Activated CD8-positive, alpha-beta T cell treated with anti-CD3 and anti-CD28 coated beads for 36 hours (primary cell): ENCODE measurements at regions of chr7 and their contacts with region 1.

Region 1: DNA sequence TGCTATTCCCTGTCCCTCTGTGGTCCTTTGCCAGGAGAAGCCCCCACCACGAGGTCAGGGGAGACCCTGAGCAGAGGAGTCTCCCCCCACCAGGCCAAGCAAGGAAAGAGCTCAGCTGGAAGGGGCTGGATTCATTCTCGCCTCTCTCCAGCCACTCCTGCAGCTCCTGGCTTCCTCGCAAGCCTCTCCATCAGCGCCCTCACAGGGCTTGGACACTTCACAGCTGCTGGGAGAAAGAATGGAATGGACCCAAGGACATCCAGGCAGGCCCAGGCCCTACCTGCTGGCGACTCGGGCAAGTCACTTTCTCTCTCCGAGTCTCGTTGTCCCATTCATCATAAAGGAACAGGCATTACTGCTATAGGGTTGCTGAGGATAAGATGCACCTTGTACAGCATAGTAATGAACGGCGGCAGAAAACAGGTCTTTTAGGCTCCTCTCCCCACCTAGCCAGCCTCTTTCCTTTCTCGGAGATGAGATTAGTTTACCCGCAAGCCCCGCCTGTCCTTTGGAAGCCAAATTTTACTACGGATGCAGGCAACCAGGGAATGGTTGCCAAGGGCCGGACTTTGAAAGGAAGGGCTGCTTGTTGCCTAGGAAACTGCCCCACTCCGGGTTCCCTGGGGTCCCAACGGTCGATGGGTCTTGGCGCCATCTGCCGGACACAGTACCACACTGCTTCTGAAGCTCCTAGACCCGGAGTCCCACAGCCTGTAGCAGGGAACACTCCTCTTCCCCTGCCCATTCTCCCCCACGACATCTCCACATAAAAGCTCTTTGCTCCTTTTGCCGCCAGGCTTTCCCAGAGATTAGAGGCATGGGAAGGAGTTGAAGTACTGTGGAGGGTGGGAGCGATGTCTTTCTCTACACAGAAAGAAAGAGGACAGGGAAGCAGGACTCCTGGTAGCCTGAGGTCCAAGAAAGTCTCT is 22.3 kb downstream of the IMPDH1 start:
- DNase-seq: peak; percentile 85
- ATAC-seq: peak; percentile 95
- H3K4me3 Mint-ChIP-seq: no peak overlapping the region
- H3K27ac Mint-ChIP-seq: no peak overlapping the region
- H3K4me1 Mint-ChIP-seq: no peaks in the 10 kb centered on the region
- H3K27me3 Mint-ChIP-seq: no peaks in the 10 kb centered on the region
- CTCF ChIP-seq: peak; percentile 88

Region 2: GRCh38 chr7:128201051-128201689 is 186.3 kb before region 1 on chr7:
- CTCF ChIA-PET with region 1: no interaction called
- POLR2A ChIA-PET with region 1: no interaction called
- intact Hi-C with region 1: no loop called
- DNase-seq: no peak
- ATAC-seq: peak; percentile 30
- H3K4me3 Mint-ChIP-seq: peak overlapping the region; percentile 41
- H3K27ac Mint-ChIP-seq: no peak overlapping the region
- H3K4me1 Mint-ChIP-seq: peaks cover 9% of the 10 kb centered on the region
- H3K27me3 Mint-ChIP-seq: peaks cover 42% of the 10 kb centered on the region
- CTCF ChIP-seq: no peak

Region 3: DNA sequence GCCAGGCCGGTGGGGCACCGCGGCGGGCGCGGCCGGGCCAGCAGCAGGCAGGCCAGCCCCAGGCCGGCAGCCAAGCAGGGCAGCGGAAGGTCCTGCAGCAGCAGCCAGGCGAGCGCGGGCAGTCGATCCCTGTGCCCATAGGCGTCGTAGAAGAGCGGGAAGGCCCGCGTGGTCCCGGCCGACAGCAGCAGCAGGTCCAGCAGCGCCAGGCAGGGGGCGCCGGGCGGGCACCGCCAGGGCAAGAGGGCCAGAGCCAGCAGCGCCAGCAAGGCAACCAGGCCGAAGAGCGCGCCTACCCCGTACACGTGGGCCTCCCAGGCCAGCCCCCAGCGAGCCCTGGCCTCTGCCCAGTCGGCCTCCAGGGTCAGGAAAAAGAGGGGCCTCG is 35.3 kb before region 1 on chr7:
- CTCF ChIA-PET with region 1: interaction called, 264 read pairs
- POLR2A ChIA-PET with region 1: interaction called, 3 read pairs
- intact Hi-C with region 1: loop called (anchors 2 kb)
- DNase-seq: peak; percentile 40
- ATAC-seq: peak; percentile 45
- H3K4me3 Mint-ChIP-seq: no peak overlapping the region
- H3K27ac Mint-ChIP-seq: no peak overlapping the region
- H3K4me1 Mint-ChIP-seq: no peaks in the 10 kb centered on the region
- H3K27me3 Mint-ChIP-seq: peaks cover 19% of the 10 kb centered on the region
- CTCF ChIP-seq: peak; percentile 34

Region 4: DNA sequence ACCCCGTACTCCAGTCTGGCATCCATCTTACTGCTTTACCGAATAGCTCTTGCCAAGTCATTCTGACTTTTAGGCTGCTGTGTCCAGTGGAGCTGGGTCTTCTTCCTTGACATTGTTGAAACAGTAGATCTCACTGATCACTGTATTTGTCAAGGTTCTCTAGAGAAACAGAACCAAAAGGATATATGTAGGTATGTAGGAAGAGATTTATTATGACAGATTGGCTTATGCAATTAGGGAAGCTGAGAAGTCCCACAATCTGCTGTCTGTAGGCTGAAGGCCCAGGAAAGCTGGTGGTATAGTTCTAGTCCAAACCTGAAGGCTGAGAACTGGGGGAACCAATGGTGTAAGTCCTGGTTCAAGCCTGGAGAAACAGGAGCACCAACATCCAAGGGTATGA is 13.9 kb before region 1 on chr7:
- CTCF ChIA-PET with region 1: interaction called, 38 read pairs
- POLR2A ChIA-PET with region 1: no interaction called
- intact Hi-C with region 1: no loop called
- DNase-seq: no peak
- ATAC-seq: no peak
- H3K4me3 Mint-ChIP-seq: no peak overlapping the region
- H3K27ac Mint-ChIP-seq: no peak overlapping the region
- H3K4me1 Mint-ChIP-seq: no peaks in the 10 kb centered on the region
- H3K27me3 Mint-ChIP-seq: peaks cover 6% of the 10 kb centered on the region
- CTCF ChIP-seq: no peak

Region 5: GRCh38 chr7:128409596-128410160 is 22.2 kb after region 1 on chr7 and contains the start of gene IMPDH1:
- CTCF ChIA-PET with region 1: interaction called, 20 read pairs
- POLR2A ChIA-PET with region 1: interaction called, 3 read pairs
- intact Hi-C with region 1: no loop called
- DNase-seq: peak; percentile 85
- ATAC-seq: peak; percentile 84
- H3K4me3 Mint-ChIP-seq: peak within 1 kb of the TSS; percentile 76
- H3K27ac Mint-ChIP-seq: peak within 1 kb of the TSS; percentile 59
- H3K4me1 Mint-ChIP-seq: peaks cover 18% of the 10 kb centered on the region
- H3K27me3 Mint-ChIP-seq: peaks cover 10% of the 10 kb centered on the region
- CTCF ChIP-seq: no peak
- total RNA-seq, gene IMPDH1: 60.5 to 68.1 TPM

Region 6: GRCh38 chr7:129101746-129102145 is 714.3 kb after region 1 on chr7:
- CTCF ChIA-PET with region 1: no interaction called
- POLR2A ChIA-PET with region 1: no interaction called
- intact Hi-C with region 1: no loop called
- DNase-seq: no peak
- ATAC-seq: no peak
- H3K4me3 Mint-ChIP-seq: no peak overlapping the region
- H3K27ac Mint-ChIP-seq: no peak overlapping the region
- H3K4me1 Mint-ChIP-seq: no peaks in the 10 kb centered on the region
- H3K27me3 Mint-ChIP-seq: no peaks in the 10 kb centered on the region
- CTCF ChIP-seq: no peak